Cardiac septum (tissue), 1 donor: ENCODE measurements at regions of chr15 and their contacts with region 1.

Region 1: GRCh38 chr15:66085128-66085527 is 168.4 kb downstream of the MEGF11 start:
- DNase-seq: no peak

Region 2: DNA sequence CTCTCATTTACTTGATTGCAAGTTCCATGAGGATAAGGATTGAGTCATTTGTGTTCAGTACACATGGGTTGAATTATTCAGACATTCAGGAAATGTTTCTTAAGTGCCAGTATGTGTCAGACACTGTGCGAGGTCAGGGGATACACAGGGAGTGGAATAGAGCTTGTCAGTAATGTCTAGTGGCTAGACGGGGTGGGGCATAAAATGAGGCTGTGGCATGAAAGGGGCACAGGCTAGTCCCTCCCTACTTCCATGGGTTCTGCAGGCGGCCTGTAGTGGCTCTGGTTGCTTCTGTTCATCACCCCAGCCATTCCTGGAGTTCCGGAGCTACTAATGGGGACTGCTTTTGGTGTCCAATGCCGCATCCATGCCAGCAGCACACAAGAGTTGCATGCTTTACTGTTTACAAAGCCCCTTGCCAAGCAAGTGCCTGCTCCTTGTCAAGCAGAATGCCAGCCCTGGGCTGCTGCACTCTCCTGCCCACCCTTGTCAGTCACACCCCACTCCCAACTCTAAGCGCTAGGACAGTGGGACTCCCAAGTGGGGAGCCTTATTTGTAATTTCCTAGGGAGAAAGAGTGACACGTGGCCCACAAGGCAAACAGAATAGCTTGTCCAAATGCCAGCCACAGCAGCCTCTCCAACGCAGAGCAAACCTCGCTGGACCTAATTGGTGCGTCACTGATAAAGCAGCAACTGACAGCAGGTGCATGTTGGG is 145.1 kb before region 1 on chr15:
- intact Hi-C with region 1: loop called (anchors 5 kb)
- DNase-seq: peak; percentile 85